Transverse colon (tissue), 4 donors: ENCODE measurements at regions of chr17 and their contacts with region 1.

Region 1: DNA sequence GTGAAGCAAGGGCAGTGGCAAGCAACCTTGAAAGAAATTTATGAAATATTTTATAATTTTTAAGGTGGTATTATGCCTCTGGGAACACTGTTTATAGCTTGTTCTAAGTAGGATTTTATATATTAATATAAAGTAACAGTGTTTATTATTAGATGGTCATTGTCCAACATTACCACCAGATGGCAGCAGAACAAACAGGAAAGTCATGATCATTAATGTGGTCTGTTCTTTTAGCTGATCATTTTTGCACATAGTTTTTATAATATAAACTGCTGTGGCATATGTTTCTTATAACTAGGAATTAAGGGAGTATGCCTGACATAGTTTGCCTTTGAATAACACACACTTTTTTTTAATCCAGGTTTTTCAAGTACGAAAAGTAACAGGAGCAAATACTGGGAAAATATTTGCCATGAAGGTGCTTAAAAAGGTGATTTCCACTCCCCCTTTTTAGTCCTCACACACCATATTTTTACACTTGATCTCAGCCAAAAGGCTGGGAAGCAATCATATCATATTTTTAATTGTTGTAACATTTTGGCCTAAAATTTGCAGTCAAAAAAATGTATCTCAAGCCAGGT is 21.4 kb downstream of the RPS6KB1 start:
- DNase-seq: no peak
- H3K4me3 ChIP-seq: no peak overlapping the region
- H3K27ac ChIP-seq: no peak overlapping the region
- H3K4me1 ChIP-seq: no peaks in the 10 kb centered on the region
- H3K27me3 ChIP-seq: no peaks in the 10 kb centered on the region
- CTCF ChIP-seq: peak; percentile 57 to 72 (median 62)
- EP300 ChIP-seq: no peak
- POLR2A ChIP-seq: no peak

Region 2: GRCh38 chr17:60036796-60037612 is 122.6 kb after region 1 on chr17:
- in situ Hi-C with region 1: loop called in 3 of 4 experiments (anchors 10 to 25 kb)
- intact Hi-C with region 1: no loop called
- DNase-seq: peak; percentile 73
- H3K4me3 ChIP-seq: no peak overlapping the region
- H3K27ac ChIP-seq: no peak overlapping the region
- H3K4me1 ChIP-seq: peaks cover 0 to 10% (median 2%) of the 10 kb centered on the region in 4 donors
- H3K27me3 ChIP-seq: peaks cover 22% of the 10 kb centered on the region
- CTCF ChIP-seq: peak; percentile 78 to 93 (median 86)
- EP300 ChIP-seq: no peak
- POLR2A ChIP-seq: no peak

Region 3: GRCh38 chr17:60077672-60078519 is 163.5 kb after region 1 on chr17:
- in situ Hi-C with region 1: loop called in 1 of 4 experiments (anchors 25 kb)
- intact Hi-C with region 1: no loop called
- DNase-seq: no peak
- H3K4me3 ChIP-seq: peak overlapping the region; percentile 44 to 79 (median 56)
- H3K27ac ChIP-seq: peak overlapping the region; percentile 80 to 93 (median 88)
- H3K4me1 ChIP-seq: peaks cover 10 to 23% (median 18%) of the 10 kb centered on the region in 4 donors
- H3K27me3 ChIP-seq: no peaks in the 10 kb centered on the region
- CTCF ChIP-seq: no peak
- EP300 ChIP-seq: no peak
- POLR2A ChIP-seq: no peak